CD8-positive, alpha-beta T cell (primary cell): ENCODE measurements at regions of chr14 and their contacts with region 1.

Region 1: DNA sequence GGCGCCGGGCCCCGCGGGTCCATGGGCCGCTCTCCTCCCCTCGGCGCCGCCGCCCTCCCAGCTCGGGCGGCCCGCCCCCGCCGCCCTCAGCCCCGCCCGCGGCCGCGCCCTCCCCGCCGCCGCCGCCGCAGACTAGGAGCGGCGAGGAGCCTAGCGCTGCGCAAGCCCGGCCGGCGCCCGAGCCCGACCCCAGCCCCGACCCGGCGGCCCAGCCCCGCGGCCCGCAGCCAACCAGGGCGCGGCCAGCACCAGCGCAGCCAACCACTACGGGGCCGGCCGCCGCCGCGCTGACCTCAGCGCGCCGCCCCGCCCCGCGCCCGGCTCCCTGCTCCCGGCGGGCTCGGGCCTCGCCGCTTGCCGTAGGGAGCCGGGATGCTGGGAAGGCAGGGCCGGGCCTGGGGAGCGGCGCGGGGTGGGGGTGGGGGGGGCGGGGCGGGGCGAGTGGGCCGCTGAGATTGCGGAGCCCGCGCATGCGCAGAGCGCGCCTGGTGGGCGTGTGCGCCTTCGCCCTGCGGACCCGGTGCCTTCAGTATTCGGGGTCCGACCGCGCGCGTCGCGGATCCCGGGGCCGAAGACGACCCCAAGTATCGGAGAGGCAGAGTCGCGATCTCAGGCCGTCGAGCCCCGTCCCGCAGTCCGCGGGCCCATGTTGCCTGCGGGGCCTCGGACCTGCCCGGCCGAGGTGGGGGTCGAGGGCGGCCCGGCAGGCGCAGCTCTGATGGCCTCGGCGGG is at the start of gene CDC42BPB:
- DNase-seq: peak in 8 of 9 experiments; percentile 21 to 68 (median 50)
- ATAC-seq: peak; percentile 92
- H3K4me3 ChIP-seq: peak within 1 kb of the TSS; percentile 28 to 52
- H3K4me3 Mint-ChIP-seq: peak within 1 kb of the TSS; percentile 72
- H3K27ac ChIP-seq: no peak within 1 kb of the TSS
- H3K27ac Mint-ChIP-seq: no peak within 1 kb of the TSS
- H3K4me1 ChIP-seq: peaks cover 6% of the 10 kb centered on the region
- H3K4me1 Mint-ChIP-seq: peaks cover 9% of the 10 kb centered on the region
- H3K27me3 ChIP-seq: peaks cover 0 to 8% of the 10 kb centered on the region in 2 experiments
- H3K27me3 Mint-ChIP-seq: peaks cover 38% of the 10 kb centered on the region
- CTCF ChIP-seq: no peak
- total RNA-seq, gene CDC42BPB: 1.4 to 2.2 TPM

Region 2: GRCh38 chr14:102509744-102510615 is 547.6 kb before region 1 on chr14 and contains the start of gene ANKRD9:
- CTCF ChIA-PET with region 1: no interaction called
- POLR2A ChIA-PET with region 1: no interaction called
- intact Hi-C with region 1: no loop called
- DNase-seq: peak; percentile 57 to 91 (median 83)
- ATAC-seq: peak; percentile 86
- H3K4me3 ChIP-seq: peak within 1 kb of the TSS; percentile 78 to 96
- H3K4me3 Mint-ChIP-seq: peak within 1 kb of the TSS; percentile 86
- H3K27ac ChIP-seq: peak within 1 kb of the TSS; percentile 48 to 50
- H3K27ac Mint-ChIP-seq: peak within 1 kb of the TSS; percentile 64
- H3K4me1 ChIP-seq: peaks cover 16% of the 10 kb centered on the region
- H3K4me1 Mint-ChIP-seq: peaks cover 9% of the 10 kb centered on the region
- H3K27me3 ChIP-seq: no peaks in the 10 kb centered on the region
- H3K27me3 Mint-ChIP-seq: no peaks in the 10 kb centered on the region
- CTCF ChIP-seq: no peak
- total RNA-seq, gene ANKRD9: 4.7 to 5.0 TPM

Region 3: GRCh38 chr14:103091041-103091882 is 33.7 kb after region 1 on chr14:
- CTCF ChIA-PET with region 1: no interaction called
- POLR2A ChIA-PET with region 1: no interaction called
- intact Hi-C with region 1: loop called in 1 of 2 experiments (anchors 1 kb)
- DNase-seq: peak; percentile 58 to 87 (median 80)
- ATAC-seq: peak; percentile 94
- H3K4me3 ChIP-seq: peak overlapping the region; percentile 26 to 50
- H3K4me3 Mint-ChIP-seq: peak overlapping the region; percentile 63
- H3K27ac ChIP-seq: no peak overlapping the region
- H3K27ac Mint-ChIP-seq: no peak overlapping the region
- H3K4me1 ChIP-seq: peaks cover 11% of the 10 kb centered on the region
- H3K4me1 Mint-ChIP-seq: peaks cover 6% of the 10 kb centered on the region
- H3K27me3 ChIP-seq: no peaks in the 10 kb centered on the region
- H3K27me3 Mint-ChIP-seq: peaks cover 2% of the 10 kb centered on the region
- CTCF ChIP-seq: peak; percentile 68

Region 4: DNA sequence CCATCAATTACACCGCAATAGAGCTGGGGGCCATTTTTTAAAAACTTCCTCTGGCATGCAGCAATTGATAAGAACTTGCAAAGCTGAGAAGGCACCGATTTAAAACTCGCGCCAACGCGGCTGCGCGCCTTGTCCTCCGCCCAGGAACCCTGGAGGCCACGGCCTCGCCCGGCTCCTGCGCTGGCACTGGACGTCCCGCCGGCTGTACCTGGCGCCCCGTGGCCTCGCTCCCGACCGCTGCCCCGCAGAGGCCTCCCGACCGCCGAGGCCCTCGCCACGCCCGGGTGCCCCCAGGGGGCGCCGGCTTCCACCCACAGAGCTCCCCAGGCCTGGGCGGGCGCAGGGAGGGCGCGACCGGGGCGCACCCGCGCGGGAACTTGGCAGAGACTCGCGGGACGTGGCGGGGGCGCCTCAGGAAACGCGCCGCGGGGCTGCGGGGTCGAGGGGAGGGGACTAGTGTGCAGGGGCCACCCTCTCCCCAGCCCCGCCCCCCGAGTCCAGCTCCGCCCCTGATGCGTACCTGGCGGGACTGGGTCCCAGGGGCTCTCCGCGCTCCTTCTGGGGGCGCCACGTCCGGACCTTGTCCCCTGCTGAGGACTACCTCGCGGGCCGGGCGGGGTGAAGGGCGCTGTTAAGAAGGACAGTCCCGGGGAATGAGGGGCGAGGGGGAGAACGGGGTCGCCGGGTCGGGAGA is 131.4 kb after region 1 on chr14:
- CTCF ChIA-PET with region 1: no interaction called
- POLR2A ChIA-PET with region 1: no interaction called
- intact Hi-C with region 1: no loop called
- DNase-seq: peak in 7 of 9 experiments; percentile 4 to 46 (median 20)
- ATAC-seq: peak; percentile 65
- H3K4me3 ChIP-seq: peak overlapping the region in 1 of 2 experiments; percentile 39
- H3K4me3 Mint-ChIP-seq: peak overlapping the region; percentile 63
- H3K27ac ChIP-seq: no peak overlapping the region
- H3K27ac Mint-ChIP-seq: no peak overlapping the region
- H3K4me1 ChIP-seq: peaks cover 6% of the 10 kb centered on the region
- H3K4me1 Mint-ChIP-seq: peaks cover 11% of the 10 kb centered on the region
- H3K27me3 ChIP-seq: peaks cover 0 to 4% of the 10 kb centered on the region in 2 experiments
- H3K27me3 Mint-ChIP-seq: peaks cover 45% of the 10 kb centered on the region
- CTCF ChIP-seq: no peak